ENCODE measurements at regions of chr6 and their contacts with region 1.

Region 1: DNA sequence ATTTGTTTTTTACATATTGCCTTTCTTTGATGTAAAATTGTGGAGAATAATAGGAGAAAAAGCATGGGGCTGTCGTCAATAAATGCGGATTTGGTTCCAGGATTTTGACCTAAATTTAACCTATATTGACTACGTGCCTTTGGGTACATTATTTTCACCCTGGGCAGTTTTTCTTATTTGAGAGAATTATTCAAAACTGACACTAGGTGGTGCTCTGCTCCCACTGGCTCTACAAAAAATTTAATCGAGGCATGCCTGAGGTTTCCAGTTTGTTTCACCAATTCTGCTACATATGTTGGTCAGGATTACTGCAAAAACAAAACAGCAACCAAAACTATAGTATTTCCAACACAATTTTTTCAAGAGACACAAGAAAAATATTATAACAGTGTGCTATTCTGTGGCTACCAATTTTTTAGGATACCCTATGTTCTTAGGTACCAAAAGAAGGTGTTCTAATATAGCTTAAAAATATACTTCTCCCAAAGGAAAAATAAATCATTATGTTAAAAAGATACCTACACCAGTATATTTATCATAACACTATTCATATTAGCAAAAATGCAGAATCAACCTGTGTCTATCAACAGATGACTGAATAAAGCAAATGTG is 48.6 kb upstream of the FABP7 start:
- DNase-seq: peak in 1 of 2 donors; percentile 48
- ATAC-seq: peak in 2 of 3 donors; percentile 42 to 45
- H3K4me3 ChIP-seq: no peak overlapping the region
- H3K4me3 Mint-ChIP-seq: no peak overlapping the region
- H3K27ac ChIP-seq: no peak overlapping the region
- H3K27ac Mint-ChIP-seq: no peak overlapping the region
- H3K4me1 ChIP-seq: no peaks in the 10 kb centered on the region
- H3K4me1 Mint-ChIP-seq: no peaks in the 10 kb centered on the region
- H3K27me3 ChIP-seq: no peaks in the 10 kb centered on the region
- H3K27me3 Mint-ChIP-seq: peaks cover 9 to 15% of the 10 kb centered on the region in 2 donors
- CTCF ChIP-seq: peak; percentile 83

Region 2: GRCh38 chr6:122839477-122839876 is 108.6 kb after region 1 on chr6:
- intact Hi-C with region 1: loop called (anchors 1 kb)
- DNase-seq: peak; percentile 25 to 67
- ATAC-seq: peak; percentile 58 to 71 (median 62)
- H3K4me3 ChIP-seq: no peak overlapping the region
- H3K4me3 Mint-ChIP-seq: no peak overlapping the region
- H3K27ac ChIP-seq: no peak overlapping the region
- H3K27ac Mint-ChIP-seq: no peak overlapping the region
- H3K4me1 ChIP-seq: no peaks in the 10 kb centered on the region
- H3K4me1 Mint-ChIP-seq: no peaks in the 10 kb centered on the region
- H3K27me3 ChIP-seq: no peaks in the 10 kb centered on the region
- H3K27me3 Mint-ChIP-seq: peaks cover 0 to 15% of the 10 kb centered on the region in 2 donors
- CTCF ChIP-seq: peak; percentile 46

Region 3: GRCh38 chr6:123316733-123317323 is 585.9 kb after region 1 on chr6:
- intact Hi-C with region 1: loop called (anchors 5 kb)
- DNase-seq: peak in 1 of 2 donors; percentile 8
- ATAC-seq: no peak
- H3K4me3 ChIP-seq: no peak overlapping the region
- H3K4me3 Mint-ChIP-seq: no peak overlapping the region
- H3K27ac ChIP-seq: no peak overlapping the region
- H3K27ac Mint-ChIP-seq: no peak overlapping the region
- H3K4me1 ChIP-seq: no peaks in the 10 kb centered on the region
- H3K4me1 Mint-ChIP-seq: no peaks in the 10 kb centered on the region
- H3K27me3 ChIP-seq: no peaks in the 10 kb centered on the region
- H3K27me3 Mint-ChIP-seq: no peaks in the 10 kb centered on the region
- CTCF ChIP-seq: peak; percentile 53

Measured in natural killer cell (primary cell).